ENCODE measurements at regions of chr10 and their contacts with region 1.

Region 1: DNA sequence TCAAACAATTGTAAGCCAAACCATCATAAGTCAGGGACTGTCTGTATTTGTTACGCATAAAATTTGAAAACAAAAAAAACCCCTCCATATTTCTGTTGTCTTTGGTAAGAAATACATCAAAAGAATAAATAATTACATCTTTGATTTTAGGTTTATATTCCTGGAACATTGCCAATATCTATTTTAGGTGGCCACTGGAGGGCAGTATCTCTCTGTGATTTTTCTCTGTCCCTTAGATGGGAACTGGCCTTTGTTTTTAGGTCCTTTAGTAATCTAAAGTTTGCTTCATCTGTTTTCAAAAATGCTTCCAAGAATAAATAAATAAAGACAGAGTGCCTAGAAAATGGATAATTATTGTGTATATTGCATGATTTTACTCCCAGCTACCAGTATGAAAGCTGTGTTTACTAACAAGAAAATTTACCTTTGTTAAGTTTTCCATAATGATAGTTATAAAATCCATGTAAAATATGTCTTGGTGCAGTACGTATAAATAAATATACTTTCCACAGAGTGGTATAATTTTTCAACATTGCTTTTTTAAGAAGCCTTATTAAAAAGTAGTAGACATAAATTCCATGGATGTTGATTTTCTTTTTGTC is 64.2 kb downstream of the PHYHIPL start:
- DNase-seq: peak; percentile 27
- ATAC-seq: no peak
- H3K4me3 ChIP-seq: no peak overlapping the region
- H3K27ac ChIP-seq: no peak overlapping the region
- H3K4me1 ChIP-seq: no peaks in the 10 kb centered on the region
- H3K27me3 ChIP-seq: no peaks in the 10 kb centered on the region
- CTCF ChIP-seq: peak; percentile 41 to 72 (median 58); a peak in 4 of 6 replicates
- POLR2A ChIP-seq: no peak
- RAD21 ChIP-seq: peak; percentile 74

Region 2: DNA sequence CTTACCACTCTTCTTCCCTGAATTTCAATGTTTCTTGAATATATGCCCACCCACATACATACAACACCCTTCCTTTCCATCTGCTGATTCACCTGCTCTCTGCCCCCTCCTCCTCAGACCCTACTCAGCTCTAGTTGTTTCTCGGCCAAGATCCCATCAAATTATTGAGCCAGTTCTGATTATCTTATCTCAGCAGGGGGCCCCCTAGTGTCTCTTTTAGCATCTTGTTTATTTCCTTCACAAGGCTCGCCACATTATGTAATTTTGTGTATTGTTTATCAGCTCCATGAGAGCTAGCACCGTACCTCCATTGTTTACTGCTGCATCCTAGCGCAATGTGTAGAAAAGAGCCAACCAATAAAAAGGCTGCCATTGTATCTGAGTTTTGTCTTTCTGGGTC is 49.8 kb after region 1 on chr10:
- CTCF ChIA-PET with region 1: no interaction called
- POLR2A ChIA-PET with region 1: no interaction called
- RAD21 ChIA-PET with region 1: no interaction called
- intact Hi-C with region 1: no loop called
- DNase-seq: no peak
- ATAC-seq: no peak
- H3K4me3 ChIP-seq: no peak overlapping the region
- H3K27ac ChIP-seq: no peak overlapping the region
- H3K4me1 ChIP-seq: no peaks in the 10 kb centered on the region
- H3K27me3 ChIP-seq: peaks cover 16% of the 10 kb centered on the region; the same call in 1 of the 2 replicates
- CTCF ChIP-seq: peak in 1 of 3 experiments; percentile 16; a peak in 1 of 6 replicates
- POLR2A ChIP-seq: no peak
- RAD21 ChIP-seq: peak; percentile 26; the same call in 1 of the 2 replicates

Region 3: DNA sequence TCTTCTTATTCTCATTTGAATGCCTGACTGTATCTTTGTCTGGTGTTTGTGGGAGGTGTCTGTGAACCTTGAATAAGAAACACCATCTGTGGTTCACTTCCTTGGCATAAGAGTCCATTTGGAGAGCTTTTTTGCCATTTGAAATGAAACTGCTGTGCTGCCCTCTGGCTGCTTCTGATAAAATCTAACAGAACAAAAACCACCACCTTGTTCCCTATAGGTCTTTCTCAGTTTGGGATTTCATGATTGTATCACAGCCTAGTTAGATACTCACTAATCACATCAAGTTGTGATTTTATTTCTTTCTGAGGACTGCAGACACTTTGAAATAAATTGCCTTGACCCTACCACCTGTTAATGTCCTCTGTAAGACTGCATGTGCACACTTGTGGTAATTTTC is 224.4 kb after region 1 on chr10:
- CTCF ChIA-PET with region 1: no interaction called
- POLR2A ChIA-PET with region 1: no interaction called
- RAD21 ChIA-PET with region 1: no interaction called
- intact Hi-C with region 1: loop called (anchors 2 kb)
- DNase-seq: no peak
- ATAC-seq: peak; percentile 60; the same call in 1 of the 2 replicates
- H3K4me3 ChIP-seq: no peak overlapping the region
- H3K27ac ChIP-seq: no peak overlapping the region
- H3K4me1 ChIP-seq: no peaks in the 10 kb centered on the region
- H3K27me3 ChIP-seq: 0 out of 2 replicates have a peak, but pooled peaks cover 7% of the 10 kb centered on the region
- CTCF ChIP-seq: peak; percentile 24 to 36 (median 33); a peak in 3 of 6 replicates
- POLR2A ChIP-seq: no peak
- RAD21 ChIP-seq: peak; percentile 51

Region 4: DNA sequence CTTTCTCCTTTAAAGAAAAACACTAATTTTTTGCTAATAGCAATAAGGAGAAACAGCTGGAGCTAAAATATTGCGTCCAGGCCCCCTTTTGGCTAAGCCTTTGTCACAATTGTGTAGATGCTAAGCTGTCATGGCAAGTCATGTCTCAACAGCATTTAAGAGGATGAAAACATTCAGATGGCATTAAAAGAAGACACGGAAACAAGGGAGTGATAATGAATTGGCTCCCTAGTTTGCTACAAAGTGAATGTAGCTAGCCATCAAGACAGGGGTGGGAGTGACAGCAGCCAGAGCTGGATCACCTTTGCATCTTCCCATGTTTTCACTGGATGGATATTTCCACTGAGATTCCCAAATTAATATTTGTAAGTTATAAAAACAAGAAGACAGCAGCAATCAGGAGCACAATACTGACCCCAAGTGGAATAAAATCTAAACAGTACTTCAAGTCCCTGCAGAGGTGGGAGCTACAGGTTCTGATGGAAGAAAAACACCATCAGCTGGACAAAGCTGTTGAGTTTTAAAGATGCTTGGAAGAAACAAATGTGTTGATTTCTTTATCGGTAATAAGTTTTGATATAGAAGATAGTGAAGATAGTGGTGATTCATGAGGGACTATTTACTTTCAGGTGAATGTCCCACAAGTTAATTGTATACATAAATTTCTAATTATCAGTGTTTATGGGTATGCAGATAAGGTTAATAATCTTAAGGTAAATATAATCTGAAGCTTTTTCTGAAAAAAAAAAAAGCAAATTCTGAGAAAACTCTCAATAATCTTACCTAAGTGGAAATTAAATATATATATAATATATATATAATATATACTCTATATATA is 339.6 kb after region 1 on chr10:
- CTCF ChIA-PET with region 1: interaction called, 13 read pairs
- POLR2A ChIA-PET with region 1: no interaction called
- RAD21 ChIA-PET with region 1: no interaction called
- intact Hi-C with region 1: loop called (anchors 1 kb)
- DNase-seq: peak; percentile 32
- ATAC-seq: peak; percentile 67
- H3K4me3 ChIP-seq: no peak overlapping the region
- H3K27ac ChIP-seq: no peak overlapping the region
- H3K4me1 ChIP-seq: no peaks in the 10 kb centered on the region
- H3K27me3 ChIP-seq: peaks cover 17% of the 10 kb centered on the region; the same call in 1 of the 2 replicates
- CTCF ChIP-seq: peak; percentile 35 to 61 (median 41); a peak in 4 of 6 replicates
- POLR2A ChIP-seq: no peak
- RAD21 ChIP-seq: peak; percentile 66

Region 5: DNA sequence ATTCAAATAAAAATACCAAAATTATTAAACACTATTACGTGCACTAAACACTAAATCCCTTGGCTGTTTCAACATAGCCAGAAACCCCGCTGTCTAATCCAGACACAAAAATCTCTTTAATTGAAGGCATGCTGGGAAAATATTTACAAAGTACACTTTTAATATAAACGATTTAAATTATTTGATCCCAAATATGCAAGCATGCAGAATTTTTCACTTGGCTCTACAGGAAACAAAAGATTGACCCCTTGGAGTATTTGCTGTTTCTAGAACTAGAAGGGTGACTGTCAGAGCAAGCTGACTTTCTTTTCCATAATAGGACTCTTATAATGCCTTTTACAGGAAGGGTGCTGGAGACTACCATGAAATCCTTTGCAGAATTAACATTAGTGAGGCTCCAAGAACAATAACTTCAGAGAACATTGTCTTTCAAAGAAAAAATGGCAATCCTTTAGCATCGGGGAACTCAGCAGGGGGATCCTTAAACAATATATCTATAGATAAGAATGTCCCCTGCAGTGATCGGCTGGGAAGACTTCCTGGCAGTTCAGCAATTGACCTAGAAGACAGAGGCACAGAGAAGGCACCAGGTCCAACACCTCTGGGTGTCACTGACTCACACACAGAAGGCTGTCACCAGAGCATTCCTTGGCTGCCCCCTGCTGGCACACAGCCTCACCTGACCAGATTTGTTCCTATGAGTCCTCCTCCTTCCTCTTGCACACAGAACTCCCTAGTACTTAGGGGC is 568.4 kb after region 1 on chr10:
- CTCF ChIA-PET with region 1: no interaction called
- POLR2A ChIA-PET with region 1: no interaction called
- RAD21 ChIA-PET with region 1: no interaction called
- intact Hi-C with region 1: loop called (anchors 2 kb)
- DNase-seq: peak; percentile 42
- ATAC-seq: peak; percentile 96
- H3K4me3 ChIP-seq: no peak overlapping the region
- H3K27ac ChIP-seq: no peak overlapping the region
- H3K4me1 ChIP-seq: no peaks in the 10 kb centered on the region
- H3K27me3 ChIP-seq: no peaks in the 10 kb centered on the region
- CTCF ChIP-seq: peak; percentile 64 to 87 (median 80)
- POLR2A ChIP-seq: no peak
- RAD21 ChIP-seq: peak; percentile 71

Region 6: DNA sequence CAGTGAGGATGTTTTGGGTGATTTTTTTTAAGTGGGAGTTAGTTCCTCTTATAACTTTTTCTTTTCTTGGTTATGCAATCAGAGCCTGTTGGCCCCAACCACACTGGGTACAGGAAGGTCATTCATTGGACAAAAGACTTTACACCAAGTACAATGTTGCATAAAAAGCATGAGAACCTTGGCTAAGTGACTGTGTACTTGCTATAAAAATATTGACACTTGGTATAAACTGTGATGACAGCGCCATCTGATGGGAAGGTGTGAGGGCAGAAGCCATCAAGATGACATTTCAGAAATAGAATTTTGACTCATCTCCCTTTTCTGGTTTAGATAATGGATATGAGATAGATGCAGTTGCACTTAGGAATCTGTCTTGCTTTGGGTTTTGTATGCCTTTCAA is 792.0 kb after region 1 on chr10:
- CTCF ChIA-PET with region 1: no interaction called
- POLR2A ChIA-PET with region 1: no interaction called
- RAD21 ChIA-PET with region 1: no interaction called
- intact Hi-C with region 1: loop called (anchors 5 kb)
- DNase-seq: peak; percentile 47
- ATAC-seq: peak; percentile 85
- H3K4me3 ChIP-seq: no peak overlapping the region
- H3K27ac ChIP-seq: no peak overlapping the region
- H3K4me1 ChIP-seq: no peaks in the 10 kb centered on the region
- H3K27me3 ChIP-seq: no peaks in the 10 kb centered on the region
- CTCF ChIP-seq: peak; percentile 68 to 87 (median 75)
- POLR2A ChIP-seq: no peak
- RAD21 ChIP-seq: peak; percentile 91

Measured in HCT116 (cell line).